Right ventricle myocardium superior (tissue), 1 donor: ENCODE measurements at regions of chr12 and their contacts with region 1.

Region 1: DNA sequence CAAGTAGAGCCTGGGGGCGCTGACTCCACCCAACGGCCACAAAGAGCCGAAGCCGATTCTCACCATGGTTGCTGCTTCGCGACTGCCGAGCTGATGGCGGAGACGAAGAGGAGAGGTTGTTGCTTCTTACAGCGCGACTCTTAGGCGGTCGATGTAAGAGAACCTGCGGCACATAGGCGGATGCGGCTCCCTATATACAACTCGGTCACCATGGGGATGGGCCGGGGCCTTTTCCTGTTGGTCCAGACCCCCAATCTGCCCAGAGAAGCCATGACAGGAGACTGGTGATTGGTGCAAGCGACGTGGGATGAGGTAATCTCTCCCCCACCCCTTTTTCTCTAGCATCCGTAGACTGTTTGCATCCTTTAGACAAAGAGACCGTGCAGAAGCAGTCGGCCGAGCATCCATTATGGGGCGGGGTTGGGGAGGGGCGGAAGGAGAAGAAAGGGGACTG is at the start of gene TUBA1A:
- DNase-seq: peak; percentile 96
- ATAC-seq: peak; percentile 86
- total RNA-seq, gene TUBA1A: 88.1 TPM

Region 2: GRCh38 chr12:49130151-49131050 is 58.5 kb before region 1 on chr12:
- intact Hi-C with region 1: loop called (anchors 2 kb)
- DNase-seq: peak; percentile 97
- ATAC-seq: peak; percentile 88

Region 3: GRCh38 chr12:49413796-49414195 is 224.9 kb after region 1 on chr12:
- intact Hi-C with region 1: no loop called
- DNase-seq: no peak
- ATAC-seq: no peak

Region 4: DNA sequence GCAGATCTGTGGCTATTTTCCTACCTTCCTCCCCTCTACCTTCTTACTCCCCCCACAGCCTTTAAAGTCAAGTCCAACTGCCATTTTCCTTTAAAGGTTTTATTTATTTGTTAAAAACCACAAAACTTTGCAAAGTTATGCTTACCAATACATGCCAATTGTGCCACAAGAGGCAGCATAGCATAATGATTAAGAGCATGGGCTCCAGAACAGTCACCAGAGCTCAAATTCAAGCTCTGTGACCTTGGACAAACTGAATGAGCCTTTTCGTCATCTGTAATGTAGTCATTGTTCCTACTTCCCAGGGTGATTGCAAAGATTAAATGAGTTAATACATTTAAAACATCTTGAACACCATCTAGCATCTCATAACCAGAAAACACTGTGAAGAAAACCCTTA is 531.3 kb after region 1 on chr12:
- intact Hi-C with region 1: no loop called
- DNase-seq: no peak
- ATAC-seq: no peak